HEK293T (cell line): ENCODE measurements at regions of chr6 and their contacts with region 1.

Region 1: GRCh38 chr6:129774697-129775447 is 64.9 kb upstream of the ARHGAP18 start:
- DNase-seq: peak; percentile 88

Region 2: GRCh38 chr6:129646642-129647041 is 128.2 kb before region 1 on chr6:
- CTCF ChIA-PET with region 1: no interaction called
- POLR2A ChIA-PET with region 1: no interaction called
- DNase-seq: no peak

Region 3: DNA sequence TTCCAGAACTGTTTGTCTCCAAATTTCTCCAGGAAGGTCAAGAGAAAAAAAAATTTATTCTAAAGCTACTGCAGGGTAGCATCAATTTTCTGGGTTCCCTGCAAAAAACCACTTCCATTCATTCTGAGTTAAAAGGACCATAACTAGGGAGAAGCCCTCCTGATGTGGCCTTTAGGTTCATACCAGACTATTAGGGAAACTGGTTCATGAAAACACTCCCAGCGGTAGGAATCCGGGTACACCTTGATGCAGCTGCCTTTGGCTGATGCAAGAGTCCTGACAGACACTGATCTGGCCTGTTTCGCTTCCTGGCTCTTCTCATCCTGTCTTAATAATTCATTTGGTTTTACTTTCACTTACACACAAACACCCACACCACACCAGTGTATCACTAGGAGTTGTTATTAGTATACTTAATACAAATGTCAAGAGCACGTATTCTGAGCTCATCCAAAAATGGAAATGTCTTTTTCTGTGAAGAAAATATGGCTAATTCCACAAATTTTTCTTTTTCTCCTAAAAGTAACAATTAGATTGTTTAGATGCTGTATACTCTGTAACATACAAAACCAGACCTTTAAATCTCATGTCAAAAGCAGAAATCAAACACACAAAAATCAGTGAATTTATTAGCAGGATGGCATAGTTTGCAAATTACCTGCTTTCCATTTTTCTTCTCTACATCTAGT is 26.5 kb before region 1 on chr6:
- CTCF ChIA-PET with region 1: interaction called, 15 read pairs
- POLR2A ChIA-PET with region 1: no interaction called
- DNase-seq: no peak

Region 4: DNA sequence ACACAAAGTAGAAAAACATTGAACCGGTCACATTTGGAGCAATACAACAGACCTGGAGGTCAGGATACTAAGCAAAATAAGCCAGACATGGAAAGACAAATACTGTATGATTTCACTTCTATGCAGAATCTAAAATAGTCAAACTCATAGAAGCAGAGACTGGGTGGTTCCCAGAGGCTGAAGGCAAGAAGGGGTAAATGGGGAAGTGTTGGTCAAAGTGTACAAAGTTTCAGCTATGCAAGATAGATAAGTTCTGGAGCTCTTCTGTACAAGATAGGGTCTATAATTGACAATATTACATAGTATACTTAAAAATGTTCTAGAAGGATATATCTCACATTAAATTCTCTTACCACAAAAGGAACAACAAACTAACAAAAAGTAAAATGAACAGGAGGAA is 15.9 kb after region 1 on chr6:
- CTCF ChIA-PET with region 1: interaction called, 10 read pairs
- POLR2A ChIA-PET with region 1: no interaction called
- DNase-seq: no peak

Region 5: GRCh38 chr6:130625825-130626527 is 851.1 kb after region 1 on chr6:
- CTCF ChIA-PET with region 1: no interaction called
- POLR2A ChIA-PET with region 1: no interaction called
- DNase-seq: peak; percentile 65